ENCODE measurements at regions of chr16 and their contacts with region 1.

Region 1: GRCh38 chr16:19645557-19645981 is 72.5 kb downstream of the KNOP1 start:
- DNase-seq: peak; percentile 62 to 81 (median 74)
- ATAC-seq: peak; percentile 70 to 87 (median 74)
- H3K4me3 ChIP-seq: peak overlapping the region in 10 of 12 donors; percentile 6 to 40 (median 28)
- H3K27ac ChIP-seq: peak overlapping the region; percentile 32 to 89 (median 82)
- H3K4me1 ChIP-seq: peaks cover 0 to 32% (median 14%) of the 10 kb centered on the region in 12 donors
- H3K27me3 ChIP-seq: no peaks in the 10 kb centered on the region
- CTCF ChIP-seq: no peak
- POLR2A ChIP-seq: no peak

Region 2: GRCh38 chr16:19601083-19601976 is 44.2 kb before region 1 on chr16:
- intact Hi-C with region 1: loop called in 1 of 10 experiments (anchors 5 kb)
- DNase-seq: no peak
- ATAC-seq: no peak
- H3K4me3 ChIP-seq: no peak overlapping the region
- H3K27ac ChIP-seq: no peak overlapping the region
- H3K4me1 ChIP-seq: peaks cover 0 to 14% (median 5%) of the 10 kb centered on the region in 12 donors
- H3K27me3 ChIP-seq: no peaks in the 10 kb centered on the region
- CTCF ChIP-seq: peak; percentile 53 to 81 (median 69)
- POLR2A ChIP-seq: no peak

Region 3: DNA sequence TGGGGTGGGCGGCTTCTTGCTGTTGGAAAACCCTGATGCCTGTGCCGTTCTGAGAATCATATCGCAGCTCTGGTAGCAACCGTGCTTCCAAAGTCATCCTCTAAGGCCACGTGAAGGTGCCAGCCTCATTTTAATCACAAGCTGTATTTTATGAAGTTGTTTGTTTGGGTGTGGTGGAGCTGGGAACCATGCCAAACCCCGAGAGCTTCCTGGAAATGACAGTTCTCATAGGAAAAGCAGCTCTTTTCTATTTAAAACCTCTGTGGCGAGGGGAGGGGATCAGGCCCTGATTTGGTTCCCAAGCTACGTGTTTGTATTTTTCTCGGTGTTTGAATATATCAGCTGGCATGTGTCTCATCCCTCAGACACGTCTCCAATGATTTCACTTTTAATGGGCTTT is 50.8 kb after region 1 on chr16:
- intact Hi-C with region 1: loop called in 1 of 10 experiments (anchors 10 kb)
- DNase-seq: peak; percentile 82 to 88 (median 86)
- ATAC-seq: peak; percentile 46 to 77 (median 61)
- H3K4me3 ChIP-seq: no peak overlapping the region
- H3K27ac ChIP-seq: peak overlapping the region; percentile 44 to 92 (median 82)
- H3K4me1 ChIP-seq: peaks cover 18 to 61% (median 45%) of the 10 kb centered on the region in 12 donors
- H3K27me3 ChIP-seq: no peaks in the 10 kb centered on the region
- CTCF ChIP-seq: no peak
- POLR2A ChIP-seq: no peak

Region 4: DNA sequence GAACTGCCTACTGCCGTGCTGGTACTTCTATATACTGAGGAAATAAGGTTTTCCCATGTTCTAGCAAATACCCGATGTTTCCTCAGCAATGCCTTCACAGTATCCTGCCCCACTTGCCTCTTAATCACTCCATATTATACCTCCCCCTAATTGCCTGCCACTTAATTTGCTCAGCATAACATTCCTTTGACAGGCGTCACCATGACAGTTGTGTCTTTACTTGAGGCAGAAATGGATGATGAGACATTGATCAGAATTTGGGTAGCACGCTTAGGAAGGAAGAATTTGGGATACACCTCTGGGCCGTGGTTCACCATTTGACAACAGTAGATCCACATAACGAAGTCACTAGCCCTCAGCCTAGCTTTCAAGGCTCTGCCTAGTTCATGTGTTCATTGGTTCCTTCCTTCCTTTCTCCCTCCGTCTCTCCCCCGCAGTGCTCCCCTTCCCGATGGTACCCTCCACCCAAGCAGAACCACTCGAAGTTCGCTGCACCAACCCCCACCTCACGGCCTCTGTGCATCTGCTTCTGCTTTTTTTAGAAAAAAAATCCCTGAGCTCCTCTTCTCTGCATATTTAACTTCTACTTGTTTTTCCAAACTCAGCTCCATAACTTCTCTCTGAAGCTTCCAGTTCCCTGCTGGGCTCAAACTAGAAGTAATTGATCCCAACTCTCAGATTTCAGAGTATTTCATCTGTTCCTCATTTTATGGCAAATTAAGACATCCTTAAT is 91.9 kb after region 1 on chr16:
- intact Hi-C with region 1: loop called in 1 of 10 experiments (anchors 5 kb)
- DNase-seq: peak in 2 of 5 donors; percentile 24 to 61
- ATAC-seq: peak in 2 of 4 donors; percentile 39
- H3K4me3 ChIP-seq: no peak overlapping the region
- H3K27ac ChIP-seq: peak overlapping the region in 1 of 12 donors; percentile 27
- H3K4me1 ChIP-seq: peaks cover 0 to 37% (median 16%) of the 10 kb centered on the region in 12 donors
- H3K27me3 ChIP-seq: no peaks in the 10 kb centered on the region
- CTCF ChIP-seq: no peak
- POLR2A ChIP-seq: no peak

Region 5: GRCh38 chr16:19963301-19963700 is 317.7 kb after region 1 on chr16:
- intact Hi-C with region 1: no loop called
- DNase-seq: peak in 4 of 5 donors; percentile 36 to 69 (median 48)
- ATAC-seq: peak; percentile 59 to 71 (median 64)
- H3K4me3 ChIP-seq: no peak overlapping the region
- H3K27ac ChIP-seq: no peak overlapping the region
- H3K4me1 ChIP-seq: no peaks in the 10 kb centered on the region
- H3K27me3 ChIP-seq: peaks cover 0 to 28% (median 0%) of the 10 kb centered on the region in 9 donors
- CTCF ChIP-seq: no peak
- POLR2A ChIP-seq: no peak